HCT116 (cell line): ENCODE measurements at regions of chr17 and their contacts with region 1.

Region 1: GRCh38 chr17:39281806-39282205 is 56.1 kb upstream of the STAC2 start:
- DNase-seq: no peak
- ATAC-seq: no peak
- H3K4me3 ChIP-seq: no peak overlapping the region
- H3K27ac ChIP-seq: no peak overlapping the region
- H3K4me1 ChIP-seq: no peaks in the 10 kb centered on the region
- H3K27me3 ChIP-seq: no peaks in the 10 kb centered on the region
- CTCF ChIP-seq: no peak
- POLR2A ChIP-seq: no peak
- RAD21 ChIP-seq: no peak

Region 2: DNA sequence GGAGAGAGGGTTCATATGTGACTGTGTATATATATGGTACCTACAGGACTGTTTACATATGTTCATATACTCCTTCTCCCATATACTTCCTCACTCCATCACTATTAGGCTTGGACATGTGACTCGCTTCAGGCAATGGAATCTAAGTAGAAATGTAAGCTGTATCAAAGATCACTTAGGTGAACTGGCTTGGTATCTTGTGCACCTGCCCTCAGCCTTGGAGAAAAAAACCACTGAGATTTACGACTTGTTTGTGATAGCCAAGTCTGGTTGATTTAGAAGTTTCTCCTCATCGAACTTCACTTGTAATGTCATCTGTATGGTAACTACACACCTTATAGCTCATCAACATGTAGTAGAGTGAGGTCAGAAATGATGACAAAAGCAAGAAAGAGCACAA is 59.7 kb after region 1 on chr17:
- CTCF ChIA-PET with region 1: no interaction called
- POLR2A ChIA-PET with region 1: no interaction called
- RAD21 ChIA-PET with region 1: no interaction called
- intact Hi-C with region 1: loop called (anchors 10 kb)
- DNase-seq: no peak
- ATAC-seq: no peak
- H3K4me3 ChIP-seq: no peak overlapping the region
- H3K27ac ChIP-seq: no peak overlapping the region
- H3K4me1 ChIP-seq: no peaks in the 10 kb centered on the region
- H3K27me3 ChIP-seq: no peaks in the 10 kb centered on the region
- CTCF ChIP-seq: no peak
- POLR2A ChIP-seq: no peak
- RAD21 ChIP-seq: no peak

Region 3: GRCh38 chr17:39450847-39451581 is 169.2 kb after region 1 on chr17 and contains the start of gene MED1:
- CTCF ChIA-PET with region 1: no interaction called
- POLR2A ChIA-PET with region 1: no interaction called
- RAD21 ChIA-PET with region 1: no interaction called
- intact Hi-C with region 1: no loop called
- DNase-seq: peak; percentile 96
- ATAC-seq: peak; percentile 93
- H3K4me3 ChIP-seq: peak within 1 kb of the TSS; percentile 76 to 99
- H3K27ac ChIP-seq: peak within 1 kb of the TSS; percentile 64
- H3K4me1 ChIP-seq: peaks cover 2 to 19% of the 10 kb centered on the region in 2 experiments; a peak in 3 of 4 replicates
- H3K27me3 ChIP-seq: no peaks in the 10 kb centered on the region
- CTCF ChIP-seq: no peak
- POLR2A ChIP-seq: peak; percentile 85
- RAD21 ChIP-seq: no peak
- total RNA-seq, gene MED1: 55.7 TPM